Activated CD4-positive, alpha-beta T cell treated with anti-CD3 and anti-CD28 coated beads for 36 hours (primary cell): ENCODE measurements at regions of chr14 and their contacts with region 1.

Region 1: DNA sequence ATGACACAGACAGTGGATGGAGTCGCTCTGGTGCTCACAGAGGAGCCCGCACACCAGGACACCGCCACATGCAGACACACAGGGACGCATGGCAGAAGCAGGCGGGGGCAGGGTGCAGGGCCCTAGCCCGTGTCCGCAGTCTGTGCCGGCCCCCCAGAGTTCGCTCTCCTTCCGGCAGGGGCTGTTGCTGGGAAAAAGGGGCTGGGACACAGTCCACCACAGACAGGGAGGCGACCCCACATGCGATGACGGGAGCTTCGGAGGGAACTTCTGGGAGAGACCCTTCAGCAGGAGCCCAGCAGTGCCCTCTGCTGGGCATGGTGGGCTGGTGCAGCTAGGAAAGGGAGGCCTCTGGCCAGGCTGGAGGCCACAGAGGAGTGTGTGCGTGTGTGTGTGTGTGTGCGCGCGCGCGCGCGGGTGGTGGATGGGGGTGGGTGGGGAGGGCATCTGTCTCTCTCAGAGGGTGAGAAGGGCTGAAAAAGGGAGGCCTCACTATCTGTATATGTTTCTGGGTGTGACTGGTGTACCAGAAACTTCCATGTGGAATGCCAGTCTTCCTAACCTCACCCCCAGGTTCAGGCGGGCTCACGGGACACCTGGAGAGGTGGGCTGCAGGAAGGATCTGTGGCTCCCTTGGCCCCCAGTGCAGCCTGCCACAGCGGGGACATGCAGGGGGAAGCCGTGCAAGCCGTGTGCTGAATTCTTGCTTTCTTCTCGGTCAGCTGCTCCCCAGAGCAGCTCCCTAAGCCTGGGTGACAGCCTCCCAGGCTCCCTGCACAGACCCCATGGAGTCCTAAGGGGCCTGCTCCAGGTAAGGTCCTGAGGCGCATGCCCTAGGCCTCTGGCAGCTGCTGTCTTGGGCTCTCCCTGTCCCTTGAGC is 60.7 kb downstream of the PLEKHG3 start:
- DNase-seq: peak; percentile 80
- ATAC-seq: peak; percentile 84
- H3K4me3 Mint-ChIP-seq: peak overlapping the region; percentile 42
- H3K27ac Mint-ChIP-seq: no peak overlapping the region
- H3K4me1 Mint-ChIP-seq: peaks cover 35% of the 10 kb centered on the region
- H3K27me3 Mint-ChIP-seq: no peaks in the 10 kb centered on the region

Region 2: GRCh38 chr14:64338616-64339316 is 426.1 kb before region 1 on chr14:
- CTCF ChIA-PET with region 1: interaction called, 3 read pairs
- POLR2A ChIA-PET with region 1: no interaction called
- intact Hi-C with region 1: loop called (anchors 5 to 10 kb)
- DNase-seq: peak; percentile 92
- ATAC-seq: peak; percentile 88
- H3K4me3 Mint-ChIP-seq: peak overlapping the region; percentile 93
- H3K27ac Mint-ChIP-seq: peak overlapping the region; percentile 87
- H3K4me1 Mint-ChIP-seq: peaks cover 18% of the 10 kb centered on the region
- H3K27me3 Mint-ChIP-seq: no peaks in the 10 kb centered on the region

Region 3: GRCh38 chr14:64671591-64671990 is 93.3 kb before region 1 on chr14:
- CTCF ChIA-PET with region 1: interaction called, 20 read pairs
- POLR2A ChIA-PET with region 1: no interaction called
- intact Hi-C with region 1: loop called (anchors 1 kb)
- DNase-seq: no peak
- ATAC-seq: peak; percentile 74
- H3K4me3 Mint-ChIP-seq: no peak overlapping the region
- H3K27ac Mint-ChIP-seq: no peak overlapping the region
- H3K4me1 Mint-ChIP-seq: peaks cover 17% of the 10 kb centered on the region
- H3K27me3 Mint-ChIP-seq: no peaks in the 10 kb centered on the region

Region 4: GRCh38 chr14:64748995-64749763 is 15.7 kb before region 1 on chr14:
- CTCF ChIA-PET with region 1: interaction called, 10 read pairs
- POLR2A ChIA-PET with region 1: no interaction called
- intact Hi-C with region 1: no loop called
- DNase-seq: no peak
- ATAC-seq: no peak
- H3K4me3 Mint-ChIP-seq: no peak overlapping the region
- H3K27ac Mint-ChIP-seq: no peak overlapping the region
- H3K4me1 Mint-ChIP-seq: peaks cover 9% of the 10 kb centered on the region
- H3K27me3 Mint-ChIP-seq: no peaks in the 10 kb centered on the region